Activated T-helper 1 cell treated with anti-CD3 and anti-CD28 coated beads, Interleukin-12 subunit alpha, Interleukin-12 subunit beta, Interleukin-2, Interleukin-4 antibody, amounts not matched to agents 30 ng/mL and 10 ng/mL and 1 ng/mL, durations not matched to agents 14 hours and 24 hours and 36 hours (primary cell): ENCODE measurements at regions of chr2 and their contacts with region 1.

Region 1: DNA sequence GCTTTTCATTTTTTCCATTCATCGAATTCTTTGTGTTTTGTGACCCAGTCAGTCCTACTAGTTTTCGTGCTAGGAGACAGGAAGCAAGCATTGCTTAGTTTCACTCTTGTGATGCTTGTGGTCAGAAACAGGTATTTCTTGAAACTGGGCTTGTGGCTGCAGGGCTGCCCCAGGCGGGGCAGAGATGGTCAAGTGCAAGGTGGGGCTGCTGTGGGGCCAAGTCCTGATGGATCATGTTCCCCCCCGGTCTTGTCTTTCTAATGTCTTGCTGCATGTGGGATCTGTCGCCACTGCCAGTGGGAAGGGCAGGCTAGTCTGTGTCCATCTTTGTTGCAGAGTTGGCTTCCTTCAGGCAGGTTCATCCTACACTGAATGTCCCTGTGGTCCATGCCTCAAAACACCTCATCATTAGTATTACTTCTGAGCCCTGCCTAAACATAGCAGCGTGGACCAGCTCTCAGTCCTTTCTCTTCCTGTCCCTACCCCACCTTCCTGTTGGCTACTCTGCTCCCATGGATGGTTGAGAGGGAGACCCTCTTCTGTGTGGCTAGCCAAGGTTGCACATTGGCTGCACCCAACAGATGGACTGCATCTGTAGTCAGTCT is 38.7 kb downstream of the INPP4A start:
- DNase-seq: no peak
- H3K4me3 Mint-ChIP-seq: peak overlapping the region; percentile 68
- H3K27ac Mint-ChIP-seq: peak overlapping the region; percentile 87
- H3K4me1 Mint-ChIP-seq: peaks cover 99% of the 10 kb centered on the region
- H3K27me3 Mint-ChIP-seq: no peaks in the 10 kb centered on the region

Region 2: DNA sequence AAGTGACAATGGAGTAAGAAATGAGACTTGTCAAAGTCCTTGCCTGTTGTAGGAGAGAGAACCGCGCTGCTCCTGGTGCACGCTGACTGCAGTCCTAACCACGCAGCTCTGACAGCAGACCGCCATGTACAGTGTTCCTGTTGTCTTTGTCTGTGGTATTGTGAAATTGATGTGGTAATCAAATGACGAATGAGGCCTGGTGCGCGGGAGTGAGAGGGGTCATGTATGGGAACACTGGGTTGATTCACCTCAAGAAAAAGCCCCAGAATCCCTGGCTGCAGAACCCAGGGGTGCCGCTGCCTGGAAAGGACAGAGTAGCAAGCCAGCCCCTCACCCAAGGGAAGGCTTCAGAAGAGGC is 25.3 kb after region 1 on chr2:
- intact Hi-C with region 1: loop called (anchors 2 kb)
- DNase-seq: peak; percentile 43
- H3K4me3 Mint-ChIP-seq: peak overlapping the region; percentile 31
- H3K27ac Mint-ChIP-seq: peak overlapping the region; percentile 91
- H3K4me1 Mint-ChIP-seq: peaks cover 77% of the 10 kb centered on the region
- H3K27me3 Mint-ChIP-seq: no peaks in the 10 kb centered on the region

Region 3: GRCh38 chr2:98548920-98549818 is 65.8 kb after region 1 on chr2:
- intact Hi-C with region 1: loop called (anchors 2 kb)
- DNase-seq: no peak
- H3K4me3 Mint-ChIP-seq: peak overlapping the region; percentile 9
- H3K27ac Mint-ChIP-seq: peak overlapping the region; percentile 35
- H3K4me1 Mint-ChIP-seq: peaks cover 72% of the 10 kb centered on the region
- H3K27me3 Mint-ChIP-seq: no peaks in the 10 kb centered on the region

Region 4: DNA sequence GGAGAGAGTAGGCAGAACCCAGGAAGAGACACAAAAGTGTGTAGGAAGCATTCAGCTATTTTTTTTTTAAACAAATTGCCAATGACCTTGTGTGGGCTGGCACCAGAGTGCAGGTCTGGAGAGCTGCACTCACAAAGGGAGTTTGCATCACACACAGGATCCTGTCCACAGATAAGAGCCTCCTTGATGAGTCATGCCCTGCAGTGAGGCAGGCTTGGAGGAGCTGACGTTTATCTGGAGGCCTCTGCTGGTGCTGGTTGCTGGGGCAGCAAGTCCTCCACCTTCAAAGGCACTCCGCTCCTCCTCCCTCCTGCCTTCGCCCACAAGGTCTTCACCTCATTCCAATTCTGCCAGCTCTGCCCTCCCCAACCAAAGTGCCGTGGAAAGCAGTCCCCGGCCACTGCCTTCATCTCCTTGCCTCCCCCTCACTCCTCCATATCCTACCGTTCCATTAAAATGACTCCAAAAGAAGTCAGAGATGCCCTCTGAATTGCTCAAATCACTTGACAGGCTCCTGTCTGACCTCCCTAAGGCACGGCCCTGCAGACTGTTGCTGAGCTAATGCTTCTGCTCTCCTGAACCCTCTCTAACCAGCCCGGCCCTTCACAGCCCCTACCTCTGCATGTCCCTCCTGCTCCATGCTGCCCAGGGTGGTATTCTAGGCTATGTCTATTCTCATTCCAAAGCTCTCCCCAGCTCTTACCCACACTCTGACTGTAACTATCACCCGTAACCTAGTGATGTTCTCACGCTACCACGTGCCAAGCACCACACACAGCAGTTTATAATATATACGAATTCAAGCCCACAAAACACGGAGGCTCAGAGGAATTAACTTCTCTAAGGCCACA is 1808.0 kb after region 1 on chr2:
- intact Hi-C with region 1: no loop called
- DNase-seq: peak; percentile 61
- H3K4me3 Mint-ChIP-seq: no peak overlapping the region
- H3K27ac Mint-ChIP-seq: no peak overlapping the region
- H3K4me1 Mint-ChIP-seq: peaks cover 6% of the 10 kb centered on the region
- H3K27me3 Mint-ChIP-seq: peaks cover 13% of the 10 kb centered on the region